ENCODE measurements at regions of chr20 and their contacts with region 1.

Region 1: DNA sequence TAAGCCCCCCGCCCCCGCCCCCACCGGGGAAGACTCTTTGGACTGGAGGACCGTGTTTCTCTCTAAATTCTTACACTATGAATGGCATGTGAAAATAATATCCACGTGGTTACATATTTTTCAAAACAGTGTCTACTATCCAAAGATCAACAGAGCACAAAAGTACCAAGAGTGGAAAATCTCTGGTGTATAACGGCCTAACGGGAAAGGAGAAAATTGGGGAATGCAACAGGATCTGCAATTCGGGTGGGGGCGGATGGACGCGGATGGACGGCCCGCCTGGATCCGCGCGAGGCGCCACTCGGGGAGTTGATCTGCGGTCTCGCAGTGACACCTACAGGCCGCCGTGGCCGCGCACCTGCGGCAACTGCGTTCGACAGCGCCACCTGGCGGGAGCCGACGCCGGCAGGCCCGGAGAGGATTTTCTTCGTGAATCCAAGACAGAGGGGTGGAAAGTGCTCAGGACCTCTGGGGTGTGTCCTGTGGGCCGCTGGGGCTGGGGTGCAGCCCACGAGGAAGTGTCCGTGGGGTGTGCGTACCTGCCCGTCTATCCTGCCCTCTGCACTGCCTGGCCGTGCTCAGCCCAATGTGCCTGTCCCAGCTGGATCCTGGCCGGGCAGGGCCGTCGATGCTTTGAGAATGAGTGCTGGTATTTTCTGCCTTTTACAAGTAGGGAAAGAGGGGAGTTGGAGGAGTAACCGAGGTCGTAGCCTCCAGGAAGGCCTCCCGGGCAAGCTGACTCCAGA is 18.6 kb downstream of the ANKRD60 start:
- DNase-seq: peak; percentile 94
- ATAC-seq: peak; percentile 89

Region 2: DNA sequence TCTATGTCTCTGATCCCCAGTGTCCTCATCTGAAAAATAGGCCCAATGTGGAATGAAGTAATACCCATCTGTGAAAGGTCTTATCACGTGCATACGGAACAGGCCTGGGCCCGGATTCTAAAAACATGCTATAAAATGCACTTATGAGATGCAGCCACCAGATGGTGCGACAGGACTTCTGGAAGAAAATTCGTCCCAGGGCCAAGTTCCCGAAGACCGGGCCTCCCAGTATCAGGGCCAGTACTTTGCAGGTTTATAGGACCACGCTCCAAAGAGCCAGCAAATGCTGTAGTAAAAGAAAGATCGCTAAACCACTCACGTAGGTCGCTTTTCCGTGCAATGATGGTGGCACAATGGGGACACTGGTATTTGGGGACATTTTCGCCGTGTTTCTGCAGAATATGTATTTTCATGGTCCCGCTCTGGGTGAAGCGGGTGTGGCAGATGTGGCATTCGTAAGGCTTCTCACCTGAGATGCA is 695.5 kb before region 1 on chr20:
- intact Hi-C with region 1: loop called (anchors 10 kb)
- DNase-seq: peak; percentile 82
- ATAC-seq: peak; percentile 86

Region 3: DNA sequence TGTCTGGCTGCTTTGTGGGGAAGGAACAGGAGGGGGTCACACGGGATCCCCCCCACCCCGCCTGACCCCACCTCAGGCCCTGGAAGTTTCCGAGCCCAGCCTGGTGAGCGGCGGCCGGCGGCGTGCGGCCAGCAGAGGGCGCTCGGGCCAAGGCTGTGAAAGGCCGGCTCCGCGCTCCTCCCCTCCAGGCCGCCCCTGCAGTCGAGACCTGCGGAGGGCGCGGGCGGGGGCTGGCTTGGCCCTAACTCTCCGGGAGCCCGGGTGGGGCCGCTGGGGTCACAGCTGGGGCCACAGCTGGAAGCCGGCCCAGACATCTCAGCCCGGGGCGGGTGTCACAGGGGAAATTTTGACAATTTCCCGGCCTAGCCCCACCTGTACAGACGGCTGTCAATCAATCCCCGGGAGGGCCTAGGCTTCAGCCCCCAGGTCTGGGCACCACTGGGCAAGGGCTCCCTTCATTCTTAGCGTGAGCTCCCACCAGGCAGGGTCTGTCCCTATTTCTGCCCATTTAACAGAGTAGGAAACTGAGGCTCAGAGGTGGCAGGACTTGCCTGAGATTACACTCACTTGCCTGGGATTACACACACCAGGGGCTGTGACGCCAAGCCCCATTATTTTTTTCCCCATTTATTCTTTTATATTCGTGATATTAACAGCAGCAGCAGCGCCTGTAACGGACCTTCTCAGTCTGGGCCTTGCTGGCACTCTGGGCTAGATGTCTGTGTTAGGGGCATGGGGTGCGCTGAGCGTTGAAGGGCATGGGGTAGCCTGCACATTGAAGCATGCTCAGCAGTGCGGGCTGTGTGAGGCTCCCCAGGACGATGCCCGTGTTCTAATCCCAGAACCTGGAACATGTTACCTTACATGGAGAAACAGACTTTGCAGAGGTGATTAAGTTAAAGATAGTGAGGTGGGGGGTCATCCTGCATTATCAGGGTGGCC is 612.6 kb before region 1 on chr20:
- intact Hi-C with region 1: loop called (anchors 1 kb)
- DNase-seq: peak; percentile 86
- ATAC-seq: peak; percentile 78

Region 4: DNA sequence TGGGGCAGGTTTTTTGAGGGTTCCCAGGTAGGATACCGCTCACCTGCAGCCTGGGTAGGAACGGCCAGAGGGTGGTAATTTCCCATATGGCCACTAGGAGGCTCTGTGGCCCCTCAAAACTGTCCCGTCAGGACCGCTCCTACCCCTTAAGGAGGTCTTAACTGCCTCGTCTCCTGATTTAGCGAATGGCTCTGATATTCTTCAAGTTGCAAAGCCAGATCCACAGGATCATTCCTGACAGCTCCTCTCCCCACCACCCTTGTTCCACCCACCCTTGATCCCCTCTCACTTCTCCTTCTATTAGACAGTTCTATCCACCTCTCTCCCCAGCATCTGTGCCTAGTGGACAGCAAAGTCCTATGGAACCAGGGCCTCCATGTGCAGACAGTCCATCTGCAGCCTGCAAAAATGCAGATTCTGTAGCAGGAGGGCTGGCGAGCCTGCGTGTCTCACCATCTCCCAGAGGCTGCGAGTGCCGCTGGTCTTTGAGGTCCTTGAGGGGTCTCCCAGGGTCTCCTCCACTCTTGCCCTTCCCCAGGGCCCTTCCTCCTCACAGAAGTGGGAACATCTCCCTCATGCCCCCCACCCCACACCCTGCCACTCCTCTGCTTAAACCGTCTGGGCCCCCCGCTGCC is 555.3 kb before region 1 on chr20:
- intact Hi-C with region 1: loop called (anchors 5 kb)
- DNase-seq: peak; percentile 64
- ATAC-seq: peak; percentile 86

Region 5: GRCh38 chr20:58555078-58555765 is 345.4 kb after region 1 on chr20:
- intact Hi-C with region 1: no loop called
- DNase-seq: no peak
- ATAC-seq: peak; percentile 59